ENCODE measurements at regions of chr18 and their contacts with region 1.

Region 1: DNA sequence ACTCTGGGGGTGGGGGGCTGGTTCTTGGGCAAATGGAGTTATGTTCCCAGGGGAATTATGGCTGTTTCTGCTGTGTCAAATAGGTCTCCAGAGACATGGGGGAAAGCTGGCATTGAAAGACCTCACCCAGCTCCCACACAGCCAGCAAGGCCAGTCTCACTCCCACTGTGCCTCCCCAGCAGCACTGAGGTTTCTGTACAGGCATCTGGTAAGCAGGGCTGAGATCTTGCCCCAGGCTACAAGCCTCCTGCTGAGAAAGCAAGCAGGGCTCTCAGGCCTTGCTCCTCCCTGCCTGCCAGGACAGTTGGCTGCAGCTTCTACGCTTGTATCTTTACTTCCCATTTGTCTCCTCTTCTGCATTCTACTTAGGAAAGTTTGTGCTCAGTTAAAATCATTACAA is 50.5 kb upstream of the FHOD3 start:
- DNase-seq: no peak
- H3K4me3 ChIP-seq: no peak overlapping the region
- H3K27ac ChIP-seq: no peak overlapping the region
- H3K4me1 ChIP-seq: no peaks in the 10 kb centered on the region
- H3K27me3 ChIP-seq: no peaks in the 10 kb centered on the region
- CTCF ChIP-seq: no peak

Region 2: DNA sequence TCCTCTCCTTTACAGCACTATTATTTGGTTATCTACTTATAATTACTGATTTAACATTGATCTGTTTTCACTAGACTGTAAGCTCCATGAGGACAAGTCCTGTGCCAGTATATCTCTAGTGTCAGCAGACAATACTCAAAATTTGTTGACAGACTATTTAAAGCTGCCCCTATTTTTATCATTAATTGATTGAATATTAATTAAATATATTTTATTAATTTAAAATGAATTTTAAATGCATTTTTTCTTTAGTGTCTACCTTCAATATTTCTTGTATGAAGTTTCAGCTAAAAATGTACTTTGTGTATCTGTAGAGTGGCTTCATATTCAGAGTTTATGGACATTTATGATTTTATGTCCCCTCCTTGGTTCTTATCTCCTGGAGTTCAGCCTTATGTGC is 24.1 kb after region 1 on chr18:
- CTCF ChIA-PET with region 1: no interaction called
- POLR2A ChIA-PET with region 1: no interaction called
- intact Hi-C with region 1: loop called (anchors 1 kb)
- DNase-seq: no peak
- H3K4me3 ChIP-seq: no peak overlapping the region
- H3K27ac ChIP-seq: no peak overlapping the region
- H3K4me1 ChIP-seq: no peaks in the 10 kb centered on the region
- H3K27me3 ChIP-seq: peaks cover 18% of the 10 kb centered on the region
- CTCF ChIP-seq: no peak

Measured in A673 (cell line).